Posterior cingulate gyrus (tissue), 11 donors: ENCODE measurements at regions of chr9 and their contacts with region 1.

Region 1: DNA sequence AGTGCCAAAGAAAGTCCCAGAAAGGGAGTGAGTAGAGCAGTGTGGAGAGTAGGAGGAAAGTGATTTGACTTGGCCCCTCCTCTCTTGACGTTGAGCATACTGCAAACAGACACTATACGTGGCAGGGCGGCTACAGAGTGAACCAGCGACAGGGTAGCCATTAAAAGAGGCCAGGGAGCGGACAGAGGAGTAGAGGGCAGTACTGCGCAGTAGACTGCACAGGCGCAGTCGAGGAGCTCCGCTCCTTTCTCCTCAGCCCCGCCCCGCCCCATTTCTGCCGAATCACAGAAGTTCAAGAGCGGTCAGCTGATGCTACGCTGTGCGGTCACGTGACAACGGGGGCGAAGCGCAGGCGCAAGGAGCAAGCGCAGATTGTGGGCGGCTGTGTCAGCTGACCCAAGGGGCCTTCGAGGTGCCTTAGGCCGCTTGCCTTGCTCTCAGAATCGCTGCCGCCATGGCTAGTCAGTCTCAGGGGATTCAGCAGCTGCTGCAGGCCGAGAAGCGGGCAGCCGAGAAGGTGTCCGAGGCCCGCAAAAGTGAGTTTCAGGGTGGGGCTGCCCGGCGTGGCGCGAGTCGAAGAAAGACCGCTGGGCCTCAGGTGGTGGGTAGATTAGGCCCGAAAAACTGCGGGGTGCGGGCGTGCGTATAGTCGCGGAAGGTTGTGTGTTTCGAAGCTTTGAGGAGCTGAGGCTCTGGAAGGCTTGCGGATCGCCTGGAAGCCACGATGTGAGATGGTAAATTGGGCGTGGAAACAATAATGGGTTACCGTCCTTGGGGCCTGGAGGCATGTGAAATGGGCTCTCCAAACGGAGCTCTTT is at the start of gene ATP6V1G1:
- DNase-seq: peak; percentile 96 to 99 (median 98)

Region 2: DNA sequence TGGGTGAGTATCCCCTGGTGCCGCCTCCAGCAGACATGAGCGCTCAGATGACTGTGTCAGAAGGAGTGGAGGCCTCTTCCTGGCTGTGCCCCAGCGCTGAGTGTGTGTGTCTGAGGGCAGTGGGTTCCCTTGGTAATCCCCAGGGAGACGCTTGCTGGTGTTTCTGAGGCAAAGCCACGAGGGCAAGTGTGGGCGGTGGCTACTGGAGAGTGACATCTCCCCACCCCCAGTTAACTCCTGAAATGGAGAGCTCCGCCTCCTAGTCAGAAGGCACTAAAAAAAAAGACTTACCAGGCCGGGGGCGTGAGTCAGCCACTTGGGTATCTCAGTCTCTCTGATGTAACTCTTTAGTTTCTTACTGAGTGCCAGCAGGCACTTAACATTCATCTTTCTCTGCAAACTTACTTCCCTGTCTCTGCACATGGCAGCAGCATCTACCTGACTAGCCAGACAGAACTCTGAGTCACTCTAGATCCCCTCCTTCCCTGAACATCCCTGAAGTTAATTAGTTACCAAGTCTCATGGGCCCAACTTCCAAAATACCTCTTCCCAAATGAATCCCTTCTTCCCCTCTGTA is 238.6 kb before region 1 on chr9:
- intact Hi-C with region 1: loop called (anchors 10 kb)
- DNase-seq: peak in 5 of 10 donors; percentile 18 to 90 (median 41)

Region 3: DNA sequence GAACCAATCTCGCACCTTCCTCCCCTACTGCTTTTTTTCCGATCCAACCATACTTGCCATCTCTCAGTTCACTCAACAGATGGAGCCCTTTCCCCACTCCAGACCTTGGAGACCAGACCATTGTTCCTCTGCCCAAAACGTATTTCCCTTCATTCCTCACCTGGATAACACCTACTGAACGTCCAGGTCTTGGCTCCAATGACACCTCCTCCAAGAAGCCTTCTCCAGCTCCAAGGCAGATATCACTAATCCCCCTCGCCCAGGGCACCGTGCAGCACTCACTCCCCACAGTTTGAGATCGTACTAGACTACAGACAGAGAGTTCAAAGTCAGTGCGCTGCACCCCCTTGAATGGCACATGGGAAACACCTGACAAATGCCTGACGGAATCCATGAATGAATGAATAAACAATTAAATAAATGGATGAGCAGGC is 152.7 kb before region 1 on chr9:
- intact Hi-C with region 1: loop called (anchors 5 kb)
- DNase-seq: peak in 4 of 10 donors; percentile 14 to 59 (median 34)

Region 4: DNA sequence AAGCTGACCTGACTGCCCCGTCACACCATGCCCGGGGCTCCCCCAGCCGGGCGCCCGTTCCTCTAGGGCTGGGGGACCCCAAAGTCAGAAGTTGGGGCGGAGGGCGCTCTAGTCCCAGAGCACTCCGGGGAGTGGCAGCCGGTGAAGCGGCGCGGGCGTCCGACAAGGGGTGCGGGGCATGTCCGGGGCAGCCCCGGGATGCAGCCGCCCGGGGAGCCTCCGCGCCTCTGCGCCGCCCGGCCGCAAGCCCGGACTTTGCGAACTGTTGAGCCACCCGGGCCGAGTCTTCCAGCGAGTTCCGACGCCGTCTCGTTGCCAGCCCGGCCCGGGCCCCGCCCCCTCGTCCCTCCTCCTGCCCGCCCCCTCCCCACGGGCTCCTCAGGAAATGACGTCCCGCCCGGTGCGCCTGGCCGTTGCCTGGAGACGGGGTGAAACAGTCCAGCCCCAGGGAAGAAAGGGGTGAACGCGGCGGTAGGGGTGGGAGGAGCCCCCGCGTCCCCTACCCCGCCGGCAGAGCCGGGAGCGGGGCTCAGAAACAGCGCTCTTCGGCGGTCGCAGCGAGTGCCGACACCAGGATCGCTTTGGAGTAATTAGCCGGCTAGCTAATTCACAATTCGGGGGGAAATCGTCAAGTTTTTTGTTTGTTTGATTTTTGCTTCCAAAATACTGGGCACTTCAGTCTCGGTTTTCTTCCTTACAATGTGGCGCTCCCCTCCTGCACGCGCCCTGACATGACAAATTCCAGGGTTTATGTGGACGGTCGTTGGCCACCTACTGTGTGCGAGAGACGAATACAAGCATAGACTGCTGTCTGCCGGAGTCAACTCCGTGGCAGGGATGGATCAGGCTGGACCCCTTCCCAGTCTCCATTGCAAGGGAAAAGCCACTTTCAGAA is 82.2 kb before region 1 on chr9 and contains the start of gene WHRN:
- intact Hi-C with region 1: loop called (anchors 5 kb)
- DNase-seq: peak; percentile 83 to 99 (median 90)